ENCODE measurements at regions of chr11 and their contacts with region 1.

Region 1: DNA sequence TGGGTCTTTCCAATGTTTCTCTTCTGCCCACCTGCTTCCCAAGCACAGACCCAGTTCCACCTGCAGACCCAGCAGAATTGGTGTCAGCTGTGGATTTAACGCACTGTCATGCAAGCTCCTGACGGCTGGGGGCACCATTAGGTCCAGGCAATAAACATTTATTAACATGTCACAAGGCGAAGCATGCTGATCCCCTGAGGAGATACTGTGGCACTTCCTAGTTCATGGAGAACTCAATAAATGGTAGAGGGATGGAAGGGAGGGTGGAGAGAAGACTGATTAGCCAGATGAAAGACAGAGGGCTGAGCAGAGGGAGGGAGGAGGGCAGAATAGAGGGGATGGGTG is 68.3 kb upstream of the TSPAN18 start:
- DNase-seq: peak; percentile 65
- H3K4me3 Mint-ChIP-seq: no peak overlapping the region
- H3K27ac Mint-ChIP-seq: no peak overlapping the region
- H3K4me1 Mint-ChIP-seq: peaks cover 17% of the 10 kb centered on the region
- H3K27me3 Mint-ChIP-seq: no peaks in the 10 kb centered on the region

Region 2: DNA sequence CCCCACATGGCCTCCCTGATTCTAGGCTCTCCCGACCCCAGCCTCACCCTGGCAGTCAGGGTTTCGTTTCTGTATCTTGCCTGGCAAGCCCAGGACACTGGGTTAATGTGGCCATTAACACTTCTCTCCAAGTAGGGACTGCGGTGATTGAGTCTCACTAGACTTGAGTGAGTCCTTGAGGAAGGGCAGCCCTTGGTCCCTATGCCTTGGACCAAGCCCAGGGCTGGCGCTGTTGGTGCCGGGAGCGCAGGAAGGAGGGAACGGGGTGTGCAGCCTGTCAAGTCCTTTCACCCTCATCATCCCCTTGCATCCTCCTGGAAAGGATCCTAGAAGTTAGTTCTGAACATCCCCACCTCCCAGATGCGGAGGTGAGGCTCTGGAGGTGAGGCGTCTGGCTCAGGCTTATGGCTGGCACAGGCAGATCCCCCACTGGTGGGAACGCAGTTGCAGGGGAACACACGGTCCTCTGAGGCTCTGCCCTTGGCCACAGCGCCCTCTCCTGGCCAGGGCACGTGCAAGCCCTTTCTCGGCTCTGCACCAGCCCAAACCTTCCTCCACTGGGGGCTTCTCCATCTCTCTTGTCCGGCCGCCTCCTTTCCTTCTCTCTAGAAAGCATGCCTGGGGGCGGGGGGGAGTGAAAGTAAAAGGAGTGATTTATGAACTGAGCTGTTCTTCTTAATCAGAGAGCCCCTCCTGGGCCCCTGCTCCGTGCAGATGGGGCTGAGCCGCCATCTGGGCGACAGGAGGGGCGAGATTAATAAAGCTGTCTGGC is 235.6 kb after region 1 on chr11:
- CTCF ChIA-PET with region 1: no interaction called
- intact Hi-C with region 1: loop called (anchors 2 kb)
- DNase-seq: peak; percentile 73
- H3K4me3 Mint-ChIP-seq: no peak overlapping the region
- H3K27ac Mint-ChIP-seq: no peak overlapping the region
- H3K4me1 Mint-ChIP-seq: no peaks in the 10 kb centered on the region
- H3K27me3 Mint-ChIP-seq: no peaks in the 10 kb centered on the region

Region 3: DNA sequence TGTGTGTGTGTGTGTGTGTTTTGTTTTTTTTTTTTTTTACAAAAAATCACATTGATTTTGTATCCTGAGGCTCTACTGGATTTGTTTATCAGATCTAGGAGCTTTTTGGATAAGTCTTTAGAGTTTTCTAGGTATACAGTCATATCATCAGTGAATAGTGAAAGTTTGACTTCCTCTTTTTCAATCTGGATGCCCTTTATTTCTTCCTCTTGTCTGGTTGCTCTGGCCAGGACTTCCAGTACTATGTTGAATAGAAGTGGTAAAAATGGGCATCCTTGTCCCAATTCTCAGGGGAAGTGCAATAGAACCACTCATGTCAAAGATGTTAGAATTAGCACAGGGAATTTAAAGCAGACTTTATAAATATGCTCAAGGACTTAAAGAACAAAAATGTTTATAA is 455.3 kb after region 1 on chr11:
- CTCF ChIA-PET with region 1: no interaction called
- intact Hi-C with region 1: no loop called
- DNase-seq: no peak
- H3K4me3 Mint-ChIP-seq: no peak overlapping the region
- H3K27ac Mint-ChIP-seq: no peak overlapping the region
- H3K4me1 Mint-ChIP-seq: no peaks in the 10 kb centered on the region
- H3K27me3 Mint-ChIP-seq: peaks cover 28% of the 10 kb centered on the region

Measured in activated naive CD4-positive, alpha-beta T cell treated with anti-CD3 and anti-CD28 coated beads for 36 hours (primary cell).